ENCODE measurements at regions of chr20 and their contacts with region 1.

Region 1: GRCh38 chr20:24100385-24101011 is 111.9 kb upstream of the GGTLC1 start:
- DNase-seq: peak; percentile 89
- H3K4me3 Mint-ChIP-seq: no peak overlapping the region
- H3K27ac Mint-ChIP-seq: no peak overlapping the region
- H3K4me1 Mint-ChIP-seq: peaks cover 20% of the 10 kb centered on the region
- H3K27me3 Mint-ChIP-seq: peaks cover 6% of the 10 kb centered on the region

Region 2: DNA sequence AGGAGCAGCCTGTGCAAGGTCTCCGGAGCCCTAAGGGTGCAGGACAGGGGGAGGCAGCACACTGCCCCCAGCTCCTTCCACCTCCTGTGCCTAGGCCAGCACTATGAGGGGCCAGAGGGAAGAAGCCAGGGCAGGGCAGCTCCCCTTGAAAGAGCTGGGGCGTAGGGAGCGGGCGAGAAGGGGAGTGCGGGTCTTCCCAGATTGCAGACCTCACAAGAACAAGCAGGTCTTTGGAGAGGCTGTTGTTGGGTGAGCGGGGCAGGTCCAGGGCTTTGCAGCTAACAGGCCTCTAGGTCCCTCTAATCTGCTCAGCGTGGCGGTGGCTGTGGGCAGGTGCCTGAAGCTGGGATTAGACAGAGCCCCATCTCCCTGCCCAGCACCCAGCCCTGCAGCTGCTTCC is 327.4 kb before region 1 on chr20:
- intact Hi-C with region 1: no loop called
- DNase-seq: peak; percentile 35
- H3K4me3 Mint-ChIP-seq: no peak overlapping the region
- H3K27ac Mint-ChIP-seq: no peak overlapping the region
- H3K4me1 Mint-ChIP-seq: no peaks in the 10 kb centered on the region
- H3K27me3 Mint-ChIP-seq: peaks cover 2% of the 10 kb centered on the region

Region 3: DNA sequence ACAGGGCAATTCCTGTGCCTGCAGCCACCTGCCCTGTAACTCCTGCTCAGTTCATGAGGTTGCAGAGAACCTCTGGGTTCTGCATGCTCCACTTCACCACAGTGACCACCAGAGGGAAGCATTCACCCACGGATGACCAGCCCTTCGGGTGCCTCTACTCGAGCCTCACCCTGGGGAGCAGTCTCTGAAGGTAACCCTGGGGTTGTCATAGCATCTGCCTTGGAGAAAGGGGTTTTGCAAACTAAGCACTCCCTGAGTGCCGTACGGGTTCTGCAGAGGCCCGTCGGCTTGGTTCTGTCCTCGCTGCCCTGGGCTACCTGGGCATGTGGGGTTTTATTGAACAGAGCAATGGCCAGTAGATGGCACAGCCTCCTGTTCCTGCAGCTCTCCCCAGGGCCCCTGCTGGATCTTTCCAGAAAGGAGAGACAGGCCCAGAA is 210.7 kb before region 1 on chr20:
- intact Hi-C with region 1: loop called (anchors 1 kb)
- DNase-seq: peak; percentile 90
- H3K4me3 Mint-ChIP-seq: no peak overlapping the region
- H3K27ac Mint-ChIP-seq: no peak overlapping the region
- H3K4me1 Mint-ChIP-seq: no peaks in the 10 kb centered on the region
- H3K27me3 Mint-ChIP-seq: peaks cover 10% of the 10 kb centered on the region

Region 4: DNA sequence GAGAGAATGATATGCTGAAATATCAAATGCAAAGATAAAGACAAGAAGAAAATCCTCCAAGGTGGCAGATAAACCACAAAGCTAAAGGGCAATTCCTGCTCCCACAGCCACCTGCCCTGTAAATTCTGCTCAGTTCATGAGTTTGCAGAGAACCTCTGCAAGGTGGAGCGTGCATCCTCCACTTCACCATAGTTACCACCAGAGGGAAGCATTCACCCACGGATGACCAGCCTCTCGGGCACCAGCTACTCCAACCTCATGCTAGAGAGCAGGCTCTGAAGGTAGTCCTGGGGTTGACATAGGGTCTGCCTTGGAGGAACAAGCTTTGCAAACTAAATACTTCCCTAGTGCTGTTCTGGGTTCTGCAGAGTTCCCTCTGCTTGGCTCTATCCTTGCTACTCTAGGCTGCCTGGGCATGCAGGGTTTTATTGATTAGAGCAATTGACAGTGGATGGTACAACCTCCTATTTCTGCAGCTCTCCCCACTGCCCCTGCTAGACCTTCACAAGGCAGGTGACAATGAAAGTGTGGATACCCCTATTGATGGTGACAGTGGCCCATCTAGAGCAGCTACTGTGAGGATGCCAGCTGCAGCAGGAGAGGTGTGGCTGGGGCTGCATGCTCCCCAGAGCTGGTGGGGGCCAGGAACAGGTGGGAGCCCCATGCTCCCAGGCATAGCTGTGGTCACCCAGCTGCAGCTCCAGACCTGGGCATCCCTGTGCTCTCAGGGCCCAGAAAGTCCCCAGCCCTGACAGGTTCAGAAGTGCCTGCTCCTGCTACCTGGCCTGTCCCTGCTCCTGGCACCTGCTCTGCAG is 163.0 kb before region 1 on chr20:
- intact Hi-C with region 1: loop called (anchors 1 kb)
- DNase-seq: peak; percentile 90
- H3K4me3 Mint-ChIP-seq: no peak overlapping the region
- H3K27ac Mint-ChIP-seq: no peak overlapping the region
- H3K4me1 Mint-ChIP-seq: peaks cover 1% of the 10 kb centered on the region
- H3K27me3 Mint-ChIP-seq: peaks cover 4% of the 10 kb centered on the region

Region 5: DNA sequence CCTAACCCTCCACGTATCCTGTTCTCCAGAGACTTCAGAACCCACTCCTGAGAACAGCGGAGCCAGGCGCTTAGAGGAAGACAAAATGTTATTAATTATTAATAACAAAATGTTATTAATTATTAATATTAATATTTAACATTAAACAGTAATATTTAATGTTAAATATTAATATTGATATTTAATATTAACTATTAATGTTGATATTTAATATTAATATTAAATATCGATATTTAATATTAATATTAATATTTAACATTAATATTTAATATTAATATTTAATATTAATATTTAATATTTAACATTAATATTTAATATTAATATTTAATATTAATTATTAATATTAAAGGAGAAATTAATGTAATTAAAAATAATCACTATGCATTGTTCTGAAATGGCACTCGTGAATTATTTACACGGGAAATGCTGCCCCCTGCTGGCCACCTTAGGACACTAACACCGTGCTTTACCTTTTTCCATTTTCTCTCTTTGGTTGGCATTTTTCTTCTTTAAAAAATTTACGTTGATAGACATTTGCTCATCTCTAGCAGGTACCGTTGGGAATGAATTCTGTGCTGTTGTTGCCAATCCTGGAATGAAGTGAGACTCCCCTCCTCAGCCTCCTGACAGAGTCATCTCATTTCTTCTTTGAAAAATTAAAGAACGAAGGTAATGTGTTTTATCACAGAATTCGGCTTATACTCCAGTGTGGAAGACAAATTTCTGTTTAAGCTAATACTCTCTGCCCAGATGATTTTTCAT is 104.4 kb before region 1 on chr20:
- intact Hi-C with region 1: loop called (anchors 5 kb)
- DNase-seq: peak; percentile 80
- H3K4me3 Mint-ChIP-seq: no peak overlapping the region
- H3K27ac Mint-ChIP-seq: no peak overlapping the region
- H3K4me1 Mint-ChIP-seq: no peaks in the 10 kb centered on the region
- H3K27me3 Mint-ChIP-seq: peaks cover 18% of the 10 kb centered on the region

Region 6: GRCh38 chr20:24027229-24027628 is 73.3 kb before region 1 on chr20:
- intact Hi-C with region 1: loop called (anchors 5 kb)
- DNase-seq: peak; percentile 95
- H3K4me3 Mint-ChIP-seq: peak overlapping the region; percentile 66
- H3K27ac Mint-ChIP-seq: peak overlapping the region; percentile 94
- H3K4me1 Mint-ChIP-seq: peaks cover 42% of the 10 kb centered on the region
- H3K27me3 Mint-ChIP-seq: no peaks in the 10 kb centered on the region

Region 7: DNA sequence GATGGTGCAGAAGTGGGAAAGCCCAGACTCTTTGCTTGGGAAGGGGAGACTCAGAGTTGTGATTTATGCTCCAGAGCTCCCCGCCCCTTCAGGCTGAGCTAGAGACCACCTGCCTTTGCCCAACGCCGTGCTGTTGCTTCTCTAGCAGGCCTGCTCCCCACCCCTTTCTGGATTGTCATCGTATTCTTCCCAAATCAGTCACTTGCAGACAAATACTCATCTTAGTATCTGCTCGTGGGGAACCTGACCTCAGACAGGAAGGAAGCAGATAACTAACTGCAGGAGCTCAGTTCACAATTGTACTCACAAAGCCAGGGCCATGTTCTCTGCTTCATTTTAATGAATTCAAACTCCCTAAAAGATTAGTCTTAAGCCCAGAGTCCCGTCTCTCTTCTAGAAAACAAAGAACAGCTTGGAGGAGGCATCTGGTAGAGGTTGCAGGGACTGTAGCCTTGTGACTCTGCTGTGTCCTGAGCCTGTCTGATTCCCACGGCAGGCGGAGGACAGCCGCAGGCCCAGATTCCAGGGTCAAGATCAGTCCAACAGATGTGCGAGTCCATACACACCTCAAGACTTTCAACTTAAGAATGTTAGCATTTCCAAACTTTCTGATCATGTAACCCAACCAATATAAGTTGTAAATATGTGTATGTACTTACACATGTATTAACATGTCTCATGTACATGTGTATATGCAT is 54.7 kb before region 1 on chr20:
- intact Hi-C with region 1: loop called (anchors 5 kb)
- DNase-seq: peak; percentile 79
- H3K4me3 Mint-ChIP-seq: peak overlapping the region; percentile 51
- H3K27ac Mint-ChIP-seq: peak overlapping the region; percentile 69
- H3K4me1 Mint-ChIP-seq: peaks cover 40% of the 10 kb centered on the region
- H3K27me3 Mint-ChIP-seq: no peaks in the 10 kb centered on the region

Measured in activated CD4-positive, alpha-beta T cell treated with anti-CD3 and anti-CD28 coated beads, Interleukin-2, amount 10 ng/mL, durations not matched to agents 24 days and 14 days (primary cell).